T-cell (primary cell): ENCODE measurements at regions of chr14 and their contacts with region 1.

Region 1: GRCh38 chr14:24271134-24271833 is at the start of gene RABGGTA:
- DNase-seq: peak; percentile 85 to 98 (median 96)
- ATAC-seq: peak; percentile 87 to 97 (median 95)
- H3K4me3 ChIP-seq: peak within 1 kb of the TSS; percentile 82 to 94
- H3K4me3 Mint-ChIP-seq: peak within 1 kb of the TSS; percentile 84 to 90 (median 90)
- H3K27ac ChIP-seq: peak within 1 kb of the TSS; percentile 96
- H3K27ac Mint-ChIP-seq: peak within 1 kb of the TSS; percentile 95 to 97
- H3K4me1 ChIP-seq: peaks cover 15 to 29% of the 10 kb centered on the region in 2 experiments
- H3K4me1 Mint-ChIP-seq: peaks cover 34 to 51% (median 37%) of the 10 kb centered on the region in 3 donors
- H3K27me3 ChIP-seq: no peaks in the 10 kb centered on the region
- H3K27me3 Mint-ChIP-seq: no peaks in the 10 kb centered on the region
- total RNA-seq, gene RABGGTA: 49.3 to 66.5 (median 62.4) TPM

Region 2: DNA sequence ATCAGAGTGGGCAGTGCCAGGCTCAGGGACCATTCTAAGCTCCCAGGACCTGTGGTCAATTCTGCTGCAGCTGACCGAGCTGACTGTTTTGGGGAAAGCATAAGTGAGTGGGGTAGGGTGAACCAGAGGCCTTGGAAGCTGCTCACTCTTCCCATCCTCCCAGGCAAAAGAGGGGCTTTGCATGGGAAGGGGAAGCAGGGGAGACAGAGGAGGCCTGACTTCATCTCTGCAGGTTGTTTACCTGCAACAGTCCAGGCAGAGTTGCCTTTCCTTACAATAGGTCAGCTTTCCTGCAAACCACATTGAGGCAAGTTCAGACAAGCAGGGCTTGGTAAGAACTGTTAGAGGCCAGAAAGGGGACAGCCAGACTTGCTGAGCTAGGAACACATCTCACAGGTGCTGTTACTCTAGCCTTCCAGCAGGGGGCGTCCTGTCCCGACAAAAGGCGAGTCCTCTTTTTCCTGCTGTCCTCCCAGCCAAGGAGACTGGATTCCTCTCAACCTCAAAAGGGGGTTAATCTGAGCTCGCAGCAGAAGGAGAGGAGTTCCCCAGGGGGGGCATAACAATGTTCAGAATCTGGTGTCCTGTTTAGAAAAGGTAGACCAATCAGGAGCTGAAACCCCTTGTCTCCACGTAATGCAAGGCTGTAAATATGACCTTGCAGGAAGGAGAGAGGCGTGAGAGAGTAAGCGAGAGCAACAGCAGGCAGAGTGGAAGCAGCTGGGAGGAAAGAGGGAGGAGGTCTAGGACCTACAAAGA is 639.4 kb before region 1 on chr14:
- CTCF ChIA-PET with region 1: no interaction called
- POLR2A ChIA-PET with region 1: no interaction called
- DNase-seq: peak; percentile 26 to 81 (median 59)
- ATAC-seq: peak; percentile 78 to 87 (median 84)
- H3K4me3 ChIP-seq: peak overlapping the region; percentile 15 to 41
- H3K4me3 Mint-ChIP-seq: peak overlapping the region; percentile 58 to 69 (median 63)
- H3K27ac ChIP-seq: no peak overlapping the region
- H3K27ac Mint-ChIP-seq: peak overlapping the region; percentile 1 to 44
- H3K4me1 ChIP-seq: peaks cover 0 to 9% of the 10 kb centered on the region in 2 experiments
- H3K4me1 Mint-ChIP-seq: peaks cover 7 to 11% (median 11%) of the 10 kb centered on the region in 3 donors
- H3K27me3 ChIP-seq: peaks cover 0 to 3% of the 10 kb centered on the region in 2 experiments
- H3K27me3 Mint-ChIP-seq: no peaks in the 10 kb centered on the region

Region 3: GRCh38 chr14:24290746-24291145 is 19.5 kb after region 1 on chr14:
- CTCF ChIA-PET with region 1: no interaction called
- POLR2A ChIA-PET with region 1: no interaction called
- DNase-seq: no peak
- ATAC-seq: no peak
- H3K4me3 ChIP-seq: no peak overlapping the region
- H3K4me3 Mint-ChIP-seq: no peak overlapping the region
- H3K27ac ChIP-seq: no peak overlapping the region
- H3K27ac Mint-ChIP-seq: no peak overlapping the region
- H3K4me1 ChIP-seq: peaks cover 0 to 13% of the 10 kb centered on the region in 2 experiments
- H3K4me1 Mint-ChIP-seq: peaks cover 0 to 13% (median 2%) of the 10 kb centered on the region in 3 donors
- H3K27me3 ChIP-seq: no peaks in the 10 kb centered on the region
- H3K27me3 Mint-ChIP-seq: no peaks in the 10 kb centered on the region

Region 4: GRCh38 chr14:24473211-24473610 is 201.9 kb after region 1 on chr14:
- CTCF ChIA-PET with region 1: no interaction called
- POLR2A ChIA-PET with region 1: interaction called in 1 of 2 experiments, 15 read pairs
- DNase-seq: no peak
- ATAC-seq: no peak
- H3K4me3 ChIP-seq: no peak overlapping the region
- H3K4me3 Mint-ChIP-seq: no peak overlapping the region
- H3K27ac ChIP-seq: no peak overlapping the region
- H3K27ac Mint-ChIP-seq: no peak overlapping the region
- H3K4me1 ChIP-seq: no peaks in the 10 kb centered on the region
- H3K4me1 Mint-ChIP-seq: no peaks in the 10 kb centered on the region
- H3K27me3 ChIP-seq: no peaks in the 10 kb centered on the region
- H3K27me3 Mint-ChIP-seq: no peaks in the 10 kb centered on the region